CD14-positive monocyte (primary cell): ENCODE measurements at regions of chr17 and their contacts with region 1.

Region 1: GRCh38 chr17:4777969-4778761 is 6.5 kb downstream of the TM4SF5 start:
- DNase-seq: no peak
- H3K4me3 ChIP-seq: no peak overlapping the region
- H3K4me3 Mint-ChIP-seq: no peak overlapping the region
- H3K27ac ChIP-seq: no peak overlapping the region
- H3K27ac Mint-ChIP-seq: no peak overlapping the region
- H3K4me1 ChIP-seq: no peaks in the 10 kb centered on the region
- H3K4me1 Mint-ChIP-seq: peaks cover 3% of the 10 kb centered on the region
- H3K27me3 ChIP-seq: peaks cover 2 to 23% of the 10 kb centered on the region in 2 donors
- H3K27me3 Mint-ChIP-seq: peaks cover 32 to 60% (median 58%) of the 10 kb centered on the region in 3 donors
- CTCF ChIP-seq: no peak

Region 2: GRCh38 chr17:4554997-4555799 is 223.0 kb before region 1 on chr17 and contains the start of gene MYBBP1A:
- intact Hi-C with region 1: no loop called
- DNase-seq: peak; percentile 94 to 96 (median 95)
- H3K4me3 ChIP-seq: peak within 1 kb of the TSS; percentile 70 to 89 (median 87)
- H3K4me3 Mint-ChIP-seq: peak within 1 kb of the TSS; percentile 91 to 97
- H3K27ac ChIP-seq: peak within 1 kb of the TSS; percentile 62 to 80
- H3K27ac Mint-ChIP-seq: peak within 1 kb of the TSS; percentile 86 to 96 (median 95)
- H3K4me1 ChIP-seq: peaks cover 19 to 26% of the 10 kb centered on the region in 2 donors
- H3K4me1 Mint-ChIP-seq: peaks cover 21% of the 10 kb centered on the region
- H3K27me3 ChIP-seq: no peaks in the 10 kb centered on the region
- H3K27me3 Mint-ChIP-seq: peaks cover 0 to 2% (median 1%) of the 10 kb centered on the region in 3 donors
- CTCF ChIP-seq: peak; percentile 14
- polyA plus RNA-seq, gene MYBBP1A: 4.2 to 22.3 (median 5.3) TPM

Region 3: GRCh38 chr17:4739122-4740024 is 38.8 kb before region 1 on chr17 and contains the starts of genes CXCL16 and ZMYND15:
- intact Hi-C with region 1: loop called in 1 of 2 experiments (anchors 5 kb)
- DNase-seq: peak; percentile 70 to 76 (median 70)
- H3K4me3 ChIP-seq: peak within 1 kb of the TSS; percentile 46 to 78 (median 76)
- H3K4me3 Mint-ChIP-seq: peak within 1 kb of the TSS; percentile 95 to 99
- H3K27ac ChIP-seq: peak within 1 kb of the TSS; percentile 57 to 79
- H3K27ac Mint-ChIP-seq: peak within 1 kb of the TSS; percentile 68 to 96 (median 89)
- H3K4me1 ChIP-seq: peaks cover 46 to 56% of the 10 kb centered on the region in 2 donors
- H3K4me1 Mint-ChIP-seq: peaks cover 47% of the 10 kb centered on the region
- H3K27me3 ChIP-seq: peaks cover 3 to 52% of the 10 kb centered on the region in 2 donors
- H3K27me3 Mint-ChIP-seq: peaks cover 41 to 60% (median 50%) of the 10 kb centered on the region in 3 donors
- CTCF ChIP-seq: no peak
- polyA plus RNA-seq, gene CXCL16: 68.1 to 204 (median 103) TPM
- polyA plus RNA-seq, gene ZMYND15: 0.97 to 13.6 (median 1.2) TPM

Region 4: DNA sequence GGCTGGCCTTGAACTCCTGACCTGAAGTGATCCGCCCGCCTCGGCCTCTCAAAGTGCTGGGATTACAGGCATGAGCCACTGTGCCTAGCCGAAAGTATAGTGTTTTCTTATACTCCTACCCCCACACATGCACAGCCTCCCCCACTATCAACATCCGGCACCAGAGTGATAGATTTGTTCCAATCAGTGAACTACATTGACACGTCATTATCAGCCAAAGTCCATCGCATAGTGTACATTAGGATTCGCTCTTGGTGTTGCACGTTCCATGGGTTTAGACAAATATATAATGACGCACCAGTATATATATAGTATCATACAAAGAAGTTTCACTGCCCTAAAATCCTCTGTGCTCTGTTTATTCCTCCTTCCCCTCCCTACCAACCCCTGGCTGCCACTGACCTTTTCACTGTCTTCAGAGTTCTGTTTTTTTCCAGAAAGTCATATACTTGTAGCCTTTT is 18.4 kb before region 1 on chr17:
- intact Hi-C with region 1: loop called in 1 of 2 experiments (anchors 1 kb)
- DNase-seq: peak; percentile 53 to 62 (median 59)
- H3K4me3 ChIP-seq: no peak overlapping the region
- H3K4me3 Mint-ChIP-seq: no peak overlapping the region
- H3K27ac ChIP-seq: peak overlapping the region; percentile 26
- H3K27ac Mint-ChIP-seq: peak overlapping the region; percentile 87 to 94 (median 90)
- H3K4me1 ChIP-seq: peaks cover 19 to 29% of the 10 kb centered on the region in 2 donors
- H3K4me1 Mint-ChIP-seq: peaks cover 18% of the 10 kb centered on the region
- H3K27me3 ChIP-seq: peaks cover 0 to 2% of the 10 kb centered on the region in 2 donors
- H3K27me3 Mint-ChIP-seq: peaks cover 8 to 17% (median 14%) of the 10 kb centered on the region in 3 donors
- CTCF ChIP-seq: no peak